ENCODE measurements at regions of chr12 and their contacts with region 1.

Region 1: DNA sequence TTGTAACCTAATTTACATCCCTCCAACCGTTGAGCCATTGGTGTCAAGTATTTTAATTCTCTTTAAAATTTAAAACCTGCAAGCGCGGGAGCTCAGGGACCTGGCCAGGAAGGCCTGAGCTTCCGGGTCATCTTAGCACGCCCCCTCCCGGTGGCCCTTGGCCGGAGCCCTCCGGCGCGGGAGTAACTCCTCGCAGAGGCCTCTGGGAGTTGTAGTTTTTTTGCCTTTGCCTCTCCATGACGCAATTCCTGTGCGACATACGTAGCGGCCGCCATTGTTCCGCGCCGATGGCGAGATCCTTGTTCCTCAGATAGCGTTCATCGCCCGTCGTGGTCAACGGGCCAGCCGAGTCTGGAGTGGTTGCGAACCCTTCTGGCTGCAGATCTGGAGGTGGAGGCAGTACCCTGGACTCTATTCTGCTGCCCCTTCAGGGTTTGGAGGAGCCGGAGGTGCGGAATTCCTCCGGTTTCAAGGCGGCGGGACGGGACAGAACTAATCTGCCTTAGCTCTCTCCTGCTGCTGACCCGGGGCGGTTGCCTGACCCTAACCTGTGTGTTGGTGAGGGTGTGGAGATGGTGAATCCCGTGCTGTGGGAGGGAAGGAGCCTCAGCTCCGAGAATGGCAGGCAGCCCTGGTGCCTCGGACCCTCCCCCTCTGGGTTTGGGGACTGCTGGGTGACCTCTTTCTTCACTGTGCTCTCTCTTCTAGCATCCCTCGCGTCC is at the start of gene ZNF268:
- DNase-seq: peak; percentile 81 to 92 (median 86)
- H3K4me3 ChIP-seq: peak within 1 kb of the TSS; percentile 56 to 99 (median 90)
- H3K27ac ChIP-seq: peak within 1 kb of the TSS in 44 of 59 donors; percentile 8 to 86 (median 52)
- H3K27me3 ChIP-seq: no peaks in the 10 kb centered on the region
- CTCF ChIP-seq: peak; percentile 61 to 94 (median 84)
- total RNA-seq, gene ZNF268: 12.1 to 30.3 (median 21.0) TPM

Region 2: DNA sequence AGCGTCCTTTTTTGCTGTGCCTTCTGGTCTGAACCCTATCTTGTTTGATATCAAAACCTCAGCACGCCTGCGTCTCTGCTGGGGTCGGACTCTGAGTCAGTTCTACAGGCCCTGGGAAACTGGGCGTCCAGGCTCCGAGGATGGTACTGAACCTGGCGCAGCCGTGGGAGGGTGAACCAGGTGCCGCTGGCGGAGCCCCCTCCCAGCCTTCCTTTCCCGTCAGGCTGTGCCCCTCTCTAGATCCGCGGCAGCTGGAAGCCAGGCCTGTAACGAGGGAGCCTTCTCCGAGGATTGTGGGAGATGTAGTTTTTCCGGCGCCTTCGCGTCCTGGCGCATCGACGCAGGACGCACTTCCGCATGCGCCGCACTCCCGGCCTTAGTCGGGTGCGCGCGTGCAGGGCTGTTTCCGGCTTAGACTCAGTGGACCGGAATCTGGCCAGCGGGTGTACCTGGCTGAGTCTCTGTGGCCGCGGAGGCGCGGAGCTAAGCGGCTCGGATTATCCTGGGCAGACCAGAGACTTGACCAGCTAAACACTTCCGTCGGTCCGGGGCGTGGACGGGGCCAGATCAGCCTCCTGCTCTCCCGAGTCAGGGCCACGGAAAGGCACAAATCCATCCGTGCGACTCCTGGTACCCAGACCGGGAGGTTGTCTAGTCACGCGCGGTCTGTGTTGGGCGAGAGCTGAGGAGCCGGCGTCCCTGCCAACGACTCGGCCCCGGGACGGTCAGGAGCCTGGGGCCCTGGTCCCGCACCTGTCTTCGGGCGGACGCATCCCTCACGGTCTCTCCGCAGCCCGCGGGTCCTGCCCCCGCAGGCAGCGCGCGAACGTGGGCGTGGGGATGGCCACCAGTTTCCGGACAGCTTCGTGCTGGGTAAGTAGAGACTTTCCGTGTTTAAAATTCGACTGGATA is 195.1 kb before region 1 on chr12 and contains the start of gene ZNF26:
- intact Hi-C with region 1: loop called (anchors 1 kb)
- DNase-seq: peak; percentile 83 to 94 (median 92)
- H3K4me3 ChIP-seq: peak within 1 kb of the TSS; percentile 73 to 100 (median 96)
- H3K27ac ChIP-seq: peak within 1 kb of the TSS; percentile 9 to 95 (median 85)
- H3K27me3 ChIP-seq: no peaks in the 10 kb centered on the region
- CTCF ChIP-seq: peak in 25 of 56 donors; percentile 9 to 50 (median 27)
- total RNA-seq, gene ZNF26: 9.4 to 26.4 (median 16.9) TPM

Region 3: GRCh38 chr12:133080368-133081158 is 100.8 kb before region 1 on chr12 and contains the start of gene ZNF140:
- intact Hi-C with region 1: loop called (anchors 1 kb)
- DNase-seq: peak; percentile 96 to 99 (median 98)
- H3K4me3 ChIP-seq: peak within 1 kb of the TSS; percentile 72 to 100 (median 94)
- H3K27ac ChIP-seq: peak within 1 kb of the TSS; percentile 88 to 100 (median 97)
- H3K27me3 ChIP-seq: peaks cover 0 to 2% (median 0%) of the 10 kb centered on the region in 45 donors
- CTCF ChIP-seq: peak in 27 of 56 donors; percentile 5 to 52 (median 29)
- total RNA-seq, gene ZNF140: 9.3 to 21.3 (median 13.5) TPM